Activated B cell treated with CpG ODN at 0.5 μM for 24 hours (primary cell): ENCODE measurements at regions of chr21 and their contacts with region 1.

Region 1: DNA sequence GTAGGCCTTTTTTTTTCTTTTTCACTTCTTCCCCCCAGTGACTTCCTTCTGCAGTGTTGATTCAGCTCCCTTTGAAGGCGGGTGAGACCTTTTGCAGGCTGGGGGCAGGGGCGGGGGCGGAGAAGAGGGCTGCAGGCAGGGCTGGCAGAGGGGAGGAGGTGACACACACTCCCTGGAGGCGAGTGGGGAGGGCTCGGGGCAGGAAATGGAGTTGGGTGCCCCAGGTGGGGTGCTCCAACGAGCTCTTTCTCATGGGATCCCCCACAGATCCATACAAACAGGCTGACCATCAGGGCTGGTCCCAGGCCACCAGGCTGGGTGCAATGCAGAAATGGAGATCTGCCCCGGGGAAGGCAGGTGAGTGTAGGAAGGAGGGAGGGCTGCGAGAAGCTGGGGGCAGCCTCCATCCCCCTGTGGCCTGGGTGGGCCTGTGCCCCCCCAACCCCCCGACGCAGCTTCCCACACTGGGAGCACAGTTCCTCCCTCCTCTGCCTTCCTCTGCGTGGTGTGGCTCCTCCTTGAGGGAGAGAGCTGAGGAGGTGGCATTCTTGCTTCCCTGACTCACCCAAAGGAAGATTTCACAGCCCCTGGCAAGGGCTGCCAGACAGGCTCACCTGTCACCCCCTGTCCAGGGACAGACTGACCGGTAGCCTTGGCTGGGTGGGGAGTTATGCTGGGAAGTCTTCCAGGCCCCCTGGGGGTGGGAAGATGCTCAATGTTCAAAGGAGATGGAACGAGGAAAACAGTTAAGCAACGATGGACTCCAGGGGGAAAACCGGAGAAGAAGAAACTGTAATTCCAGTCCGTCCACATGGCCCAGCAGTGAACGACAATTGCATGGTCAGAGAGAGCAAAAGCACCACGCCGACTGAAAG is 7.1 kb upstream of the ITGB2 start:
- DNase-seq: peak; percentile 57
- ATAC-seq: peak; percentile 61
- H3K4me3 Mint-ChIP-seq: peak overlapping the region; percentile 79
- H3K27ac Mint-ChIP-seq: peak overlapping the region; percentile 93
- H3K4me1 Mint-ChIP-seq: peaks cover 86% of the 10 kb centered on the region
- H3K27me3 Mint-ChIP-seq: no peaks in the 10 kb centered on the region
- CTCF ChIP-seq: no peak

Region 2: GRCh38 chr21:43789276-43790009 is 1138.4 kb before region 1 on chr21 and contains the start of gene RRP1:
- CTCF ChIA-PET with region 1: no interaction called
- POLR2A ChIA-PET with region 1: no interaction called
- intact Hi-C with region 1: loop called (anchors 5 kb)
- DNase-seq: peak; percentile 99
- ATAC-seq: peak; percentile 95
- H3K4me3 Mint-ChIP-seq: peak within 1 kb of the TSS; percentile 92
- H3K27ac Mint-ChIP-seq: peak within 1 kb of the TSS; percentile 91
- H3K4me1 Mint-ChIP-seq: peaks cover 19% of the 10 kb centered on the region
- H3K27me3 Mint-ChIP-seq: no peaks in the 10 kb centered on the region
- CTCF ChIP-seq: peak; percentile 53
- total RNA-seq, gene RRP1: 36.8 and 37.0 TPM in 2 replicates

Region 3: GRCh38 chr21:44792702-44793591 is 134.9 kb before region 1 on chr21:
- CTCF ChIA-PET with region 1: interaction called, 15 read pairs
- POLR2A ChIA-PET with region 1: no interaction called
- intact Hi-C with region 1: no loop called
- DNase-seq: no peak
- ATAC-seq: peak; percentile 84
- H3K4me3 Mint-ChIP-seq: no peak overlapping the region
- H3K27ac Mint-ChIP-seq: no peak overlapping the region
- H3K4me1 Mint-ChIP-seq: peaks cover 49% of the 10 kb centered on the region
- H3K27me3 Mint-ChIP-seq: no peaks in the 10 kb centered on the region
- CTCF ChIP-seq: peak; percentile 68

Region 4: GRCh38 chr21:44822484-44823178 is 105.2 kb before region 1 on chr21:
- CTCF ChIA-PET with region 1: no interaction called
- POLR2A ChIA-PET with region 1: interaction called, 10 read pairs
- intact Hi-C with region 1: loop called (anchors 5 kb)
- DNase-seq: no peak
- ATAC-seq: no peak
- H3K4me3 Mint-ChIP-seq: no peak overlapping the region
- H3K27ac Mint-ChIP-seq: no peak overlapping the region
- H3K4me1 Mint-ChIP-seq: no peaks in the 10 kb centered on the region
- H3K27me3 Mint-ChIP-seq: no peaks in the 10 kb centered on the region
- CTCF ChIP-seq: no peak

Region 5: GRCh38 chr21:44873356-44874239 is 54.2 kb before region 1 on chr21 and contains the start of gene PTTG1IP:
- CTCF ChIA-PET with region 1: interaction called, 11 read pairs
- POLR2A ChIA-PET with region 1: interaction called, 19 read pairs
- intact Hi-C with region 1: loop called (anchors 1 kb)
- DNase-seq: peak; percentile 98
- ATAC-seq: peak; percentile 81
- H3K4me3 Mint-ChIP-seq: peak within 1 kb of the TSS; percentile 92
- H3K27ac Mint-ChIP-seq: peak within 1 kb of the TSS; percentile 92
- H3K4me1 Mint-ChIP-seq: peaks cover 63% of the 10 kb centered on the region
- H3K27me3 Mint-ChIP-seq: no peaks in the 10 kb centered on the region
- CTCF ChIP-seq: no peak
- total RNA-seq, gene PTTG1IP: 35.3 and 36.6 TPM in 2 replicates

Region 6: GRCh38 chr21:44939532-44940115 is 11.8 kb after region 1 on chr21 and contains the start of gene SLX9:
- CTCF ChIA-PET with region 1: interaction called, 3 read pairs
- POLR2A ChIA-PET with region 1: interaction called, 11 read pairs
- intact Hi-C with region 1: no loop called
- DNase-seq: peak; percentile 80
- ATAC-seq: peak; percentile 92
- H3K4me3 Mint-ChIP-seq: peak within 1 kb of the TSS; percentile 88
- H3K27ac Mint-ChIP-seq: peak within 1 kb of the TSS; percentile 84
- H3K4me1 Mint-ChIP-seq: peaks cover 42% of the 10 kb centered on the region
- H3K27me3 Mint-ChIP-seq: no peaks in the 10 kb centered on the region
- CTCF ChIP-seq: no peak
- total RNA-seq, gene SLX9: 26.0 and 34.7 TPM in 2 replicates

Region 7: GRCh38 chr21:44958471-44959191 is 30.8 kb after region 1 on chr21:
- CTCF ChIA-PET with region 1: no interaction called
- POLR2A ChIA-PET with region 1: no interaction called
- intact Hi-C with region 1: no loop called
- DNase-seq: no peak
- ATAC-seq: no peak
- H3K4me3 Mint-ChIP-seq: no peak overlapping the region
- H3K27ac Mint-ChIP-seq: no peak overlapping the region
- H3K4me1 Mint-ChIP-seq: peaks cover 3% of the 10 kb centered on the region
- H3K27me3 Mint-ChIP-seq: no peaks in the 10 kb centered on the region
- CTCF ChIP-seq: no peak